ENCODE measurements at regions of chr10 and their contacts with region 1.

Region 1: DNA sequence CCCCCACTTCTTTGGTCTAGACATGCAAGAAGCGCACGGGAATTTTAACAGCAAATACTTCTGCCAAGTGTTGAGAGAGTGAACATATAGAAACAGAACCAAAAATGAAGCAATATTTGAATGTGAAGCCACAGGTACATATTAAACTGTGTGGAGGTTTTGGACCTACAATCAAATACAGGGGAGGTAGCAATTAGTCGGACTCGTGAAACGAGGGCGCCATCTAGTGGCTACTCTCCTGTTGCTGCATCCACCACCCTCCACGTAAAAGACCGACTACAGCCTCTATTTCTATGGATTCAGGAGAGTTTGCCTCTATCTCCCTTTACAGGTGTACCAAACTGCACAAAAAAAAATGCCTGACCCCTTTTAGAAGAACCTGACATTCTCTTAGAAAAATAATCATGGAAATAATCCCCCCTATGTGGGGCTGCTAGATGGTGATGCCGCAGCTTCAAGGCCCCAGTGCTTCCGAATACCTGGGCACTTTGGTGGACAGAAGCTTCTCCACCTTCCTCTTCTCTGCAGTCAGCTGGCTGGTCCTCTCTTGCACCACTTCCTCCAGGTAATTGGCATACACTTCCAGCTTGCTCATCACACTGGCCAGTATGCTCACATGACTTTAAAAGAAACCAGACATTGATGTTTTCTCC is 31.7 kb downstream of the TECTB start:
- DNase-seq: peak; percentile 69 to 82
- ATAC-seq: peak; percentile 78 to 94 (median 86)
- H3K4me3 ChIP-seq: no peak overlapping the region
- H3K27ac ChIP-seq: no peak overlapping the region
- H3K4me1 ChIP-seq: no peaks in the 10 kb centered on the region
- H3K27me3 ChIP-seq: peaks cover 0 to 3% (median 2%) of the 10 kb centered on the region in 3 donors
- CTCF ChIP-seq: peak; percentile 90

Region 2: DNA sequence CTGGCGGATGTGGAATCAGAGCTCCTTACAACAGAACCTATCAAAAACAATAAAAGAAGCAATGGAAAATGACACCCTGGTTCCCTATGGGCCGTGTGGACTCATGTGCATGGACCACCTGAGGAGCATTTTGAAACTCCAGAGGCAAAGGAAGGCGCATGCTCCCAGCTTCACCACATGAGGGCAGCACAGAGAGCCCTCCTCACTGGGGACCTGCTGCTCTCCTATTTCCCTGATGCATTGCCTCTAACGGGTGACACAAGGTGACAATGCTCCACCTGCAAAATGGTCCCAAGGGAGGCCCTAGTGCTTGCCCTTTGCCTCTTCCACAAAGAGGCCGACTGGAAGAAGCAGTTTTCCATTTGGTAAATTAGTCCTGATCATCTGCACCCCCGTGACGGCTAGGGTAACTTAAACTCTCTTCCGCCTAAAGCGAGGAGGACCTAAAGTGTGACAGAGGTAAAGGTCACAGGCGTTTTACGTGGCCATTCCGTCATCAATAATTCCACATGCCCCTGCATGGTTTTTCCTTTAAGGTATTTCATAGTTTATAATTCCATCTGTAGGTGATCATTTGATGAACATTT is 199.1 kb before region 1 on chr10:
- intact Hi-C with region 1: loop called in 1 of 2 experiments (anchors 5 kb)
- DNase-seq: no peak
- ATAC-seq: peak in 3 of 4 donors; percentile 46 to 74 (median 50)
- H3K4me3 ChIP-seq: no peak overlapping the region
- H3K27ac ChIP-seq: no peak overlapping the region
- H3K4me1 ChIP-seq: no peaks in the 10 kb centered on the region
- H3K27me3 ChIP-seq: no peaks in the 10 kb centered on the region
- CTCF ChIP-seq: peak; percentile 60

Region 3: GRCh38 chr10:112183329-112184051 is 131.5 kb before region 1 on chr10 and contains the start of gene GPAM:
- intact Hi-C with region 1: loop called in 1 of 2 experiments (anchors 5 kb)
- DNase-seq: peak; percentile 95 to 98
- ATAC-seq: peak; percentile 98 to 100 (median 99)
- H3K4me3 ChIP-seq: peak within 1 kb of the TSS; percentile 73
- H3K27ac ChIP-seq: peak within 1 kb of the TSS; percentile 92
- H3K4me1 ChIP-seq: peaks cover 13% of the 10 kb centered on the region
- H3K27me3 ChIP-seq: no peaks in the 10 kb centered on the region
- CTCF ChIP-seq: no peak
- total RNA-seq, gene GPAM: 10.2 to 20.1 (median 12.6) TPM

Region 4: DNA sequence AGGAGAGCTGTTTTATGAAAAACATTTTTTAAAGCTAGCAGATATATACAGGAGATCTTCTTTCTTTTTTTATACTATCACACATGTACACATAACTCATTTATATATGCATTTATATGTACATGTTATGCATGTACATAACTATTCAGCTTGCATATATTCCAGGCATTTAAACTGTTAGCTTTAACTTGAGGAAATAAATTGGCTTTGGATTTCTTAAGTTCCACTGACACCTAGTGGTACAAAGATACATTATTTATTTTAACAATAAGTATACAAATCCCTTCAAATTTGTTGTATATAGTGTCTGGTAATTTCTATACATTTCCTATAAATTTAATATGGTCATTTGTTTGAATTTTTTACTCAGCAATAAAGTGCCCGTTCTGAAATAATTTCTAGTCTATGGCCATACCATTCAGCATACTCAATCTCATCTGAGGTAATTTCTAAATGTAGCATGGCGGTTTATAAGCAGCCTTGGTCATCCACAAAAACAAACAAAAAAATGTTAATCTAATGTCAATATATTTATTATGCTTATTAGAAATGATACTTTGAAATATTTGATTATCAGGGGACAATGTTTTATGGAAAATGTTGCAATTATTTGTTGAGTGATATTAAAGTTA is 120.2 kb after region 1 on chr10:
- intact Hi-C with region 1: loop called in 1 of 2 experiments (anchors 10 kb)
- DNase-seq: no peak
- ATAC-seq: no peak
- H3K4me3 ChIP-seq: no peak overlapping the region
- H3K27ac ChIP-seq: no peak overlapping the region
- H3K4me1 ChIP-seq: no peaks in the 10 kb centered on the region
- H3K27me3 ChIP-seq: no peaks in the 10 kb centered on the region
- CTCF ChIP-seq: peak; percentile 45

Measured in psoas muscle (tissue), 8 donors.